ENCODE measurements at regions of chr1 and their contacts with region 1.

Region 1: DNA sequence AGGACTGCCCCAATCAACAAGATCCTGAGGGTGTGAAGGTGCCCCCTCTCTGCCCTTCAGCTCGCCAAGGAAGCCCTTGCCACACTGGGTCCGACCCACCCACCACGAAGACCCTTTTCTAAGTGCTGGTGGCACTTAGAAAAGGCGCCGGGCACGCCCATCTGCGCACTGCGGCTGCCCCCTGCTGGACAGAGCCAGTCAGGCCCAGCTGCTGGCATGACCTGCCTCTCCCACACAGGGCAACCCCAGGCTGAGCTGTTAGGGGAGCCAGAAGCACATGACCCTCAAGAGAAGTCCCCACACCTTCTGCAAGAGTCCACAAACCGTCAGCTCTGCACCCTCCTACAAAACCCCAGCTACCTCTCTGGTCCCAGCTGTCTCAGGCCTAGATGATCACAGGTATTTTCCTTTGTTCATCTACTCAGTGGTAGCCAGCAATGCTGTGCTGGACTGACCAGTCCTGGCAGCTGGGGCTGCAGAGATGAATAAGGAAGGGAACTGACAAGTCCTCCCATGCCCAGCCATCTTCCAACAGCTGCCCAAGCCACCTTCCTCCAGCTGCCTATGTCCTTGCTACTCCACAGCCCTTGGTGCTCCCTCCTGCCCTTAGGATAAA is 40.0 kb upstream of the ZC3H12A start:
- DNase-seq: peak; percentile 75
- ATAC-seq: peak; percentile 90
- H3K4me3 ChIP-seq: no peak overlapping the region
- H3K4me3 Mint-ChIP-seq: no peak overlapping the region
- H3K27ac ChIP-seq: no peak overlapping the region
- H3K27ac Mint-ChIP-seq: no peak overlapping the region
- H3K4me1 ChIP-seq: no peaks in the 10 kb centered on the region
- H3K4me1 Mint-ChIP-seq: no peaks in the 10 kb centered on the region
- H3K27me3 ChIP-seq: peaks cover 0 to 3% (median 0%) of the 10 kb centered on the region in 4 experiments
- H3K27me3 Mint-ChIP-seq: peaks cover 32% of the 10 kb centered on the region
- CTCF ChIP-seq: peak; percentile 93

Region 2: GRCh38 chr1:36099681-36100341 is 1334.6 kb before region 1 on chr1:
- CTCF ChIA-PET with region 1: no interaction called
- POLR2A ChIA-PET with region 1: no interaction called
- intact Hi-C with region 1: loop called (anchors 5 kb)
- DNase-seq: peak; percentile 81
- ATAC-seq: peak; percentile 86
- H3K4me3 ChIP-seq: peak overlapping the region in 1 of 5 experiments; percentile 9
- H3K4me3 Mint-ChIP-seq: no peak overlapping the region
- H3K27ac ChIP-seq: no peak overlapping the region
- H3K27ac Mint-ChIP-seq: no peak overlapping the region
- H3K4me1 ChIP-seq: peaks cover 0 to 7% of the 10 kb centered on the region in 2 donors
- H3K4me1 Mint-ChIP-seq: peaks cover 2% of the 10 kb centered on the region
- H3K27me3 ChIP-seq: no peaks in the 10 kb centered on the region
- H3K27me3 Mint-ChIP-seq: no peaks in the 10 kb centered on the region
- CTCF ChIP-seq: peak; percentile 93

Region 3: GRCh38 chr1:36553591-36554322 is 880.6 kb before region 1 on chr1:
- CTCF ChIA-PET with region 1: interaction called, 11 read pairs
- POLR2A ChIA-PET with region 1: no interaction called
- intact Hi-C with region 1: loop called (anchors 1 kb)
- DNase-seq: peak; percentile 73
- ATAC-seq: peak; percentile 61
- H3K4me3 ChIP-seq: no peak overlapping the region
- H3K4me3 Mint-ChIP-seq: no peak overlapping the region
- H3K27ac ChIP-seq: no peak overlapping the region
- H3K27ac Mint-ChIP-seq: no peak overlapping the region
- H3K4me1 ChIP-seq: no peaks in the 10 kb centered on the region
- H3K4me1 Mint-ChIP-seq: peaks cover 11% of the 10 kb centered on the region
- H3K27me3 ChIP-seq: peaks cover 0 to 30% (median 17%) of the 10 kb centered on the region in 4 experiments
- H3K27me3 Mint-ChIP-seq: peaks cover 34% of the 10 kb centered on the region
- CTCF ChIP-seq: peak; percentile 74

Region 4: DNA sequence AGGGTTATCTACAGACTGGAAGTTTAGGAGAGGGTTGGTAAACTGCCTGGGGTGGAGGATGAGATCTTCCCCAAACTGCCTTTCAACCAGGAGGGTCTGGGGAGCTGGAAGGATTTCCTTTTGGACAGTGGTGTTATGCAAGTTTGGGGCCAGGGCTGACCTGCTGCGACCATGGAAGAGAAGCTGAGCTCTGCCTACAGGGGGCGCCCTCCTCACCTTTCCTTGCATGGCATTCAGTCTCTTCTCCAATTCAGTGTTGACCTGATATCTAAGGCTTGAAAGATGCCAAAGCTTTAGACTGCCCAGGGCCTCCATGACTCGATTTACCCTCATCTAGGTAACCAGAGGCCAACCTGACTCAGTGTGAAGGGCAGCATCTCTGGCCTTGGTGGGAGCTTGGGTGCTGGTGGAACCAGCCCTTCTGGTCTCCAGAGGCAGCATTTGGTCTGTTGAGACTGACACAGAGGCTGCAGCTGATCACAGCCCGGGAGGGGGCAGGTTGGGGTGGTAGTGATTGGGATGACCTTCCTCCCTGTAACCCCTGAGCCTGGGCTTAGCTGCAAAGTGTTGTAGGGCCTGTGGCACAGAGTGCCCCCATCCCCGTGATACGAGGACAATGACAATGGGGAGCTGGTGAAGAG is 570.1 kb before region 1 on chr1:
- CTCF ChIA-PET with region 1: interaction called, 3 read pairs
- POLR2A ChIA-PET with region 1: no interaction called
- intact Hi-C with region 1: loop called (anchors 10 kb)
- DNase-seq: peak; percentile 25
- ATAC-seq: no peak
- H3K4me3 ChIP-seq: no peak overlapping the region
- H3K4me3 Mint-ChIP-seq: no peak overlapping the region
- H3K27ac ChIP-seq: no peak overlapping the region
- H3K27ac Mint-ChIP-seq: no peak overlapping the region
- H3K4me1 ChIP-seq: no peaks in the 10 kb centered on the region
- H3K4me1 Mint-ChIP-seq: no peaks in the 10 kb centered on the region
- H3K27me3 ChIP-seq: no peaks in the 10 kb centered on the region
- H3K27me3 Mint-ChIP-seq: peaks cover 12% of the 10 kb centered on the region
- CTCF ChIP-seq: peak; percentile 43

Region 5: DNA sequence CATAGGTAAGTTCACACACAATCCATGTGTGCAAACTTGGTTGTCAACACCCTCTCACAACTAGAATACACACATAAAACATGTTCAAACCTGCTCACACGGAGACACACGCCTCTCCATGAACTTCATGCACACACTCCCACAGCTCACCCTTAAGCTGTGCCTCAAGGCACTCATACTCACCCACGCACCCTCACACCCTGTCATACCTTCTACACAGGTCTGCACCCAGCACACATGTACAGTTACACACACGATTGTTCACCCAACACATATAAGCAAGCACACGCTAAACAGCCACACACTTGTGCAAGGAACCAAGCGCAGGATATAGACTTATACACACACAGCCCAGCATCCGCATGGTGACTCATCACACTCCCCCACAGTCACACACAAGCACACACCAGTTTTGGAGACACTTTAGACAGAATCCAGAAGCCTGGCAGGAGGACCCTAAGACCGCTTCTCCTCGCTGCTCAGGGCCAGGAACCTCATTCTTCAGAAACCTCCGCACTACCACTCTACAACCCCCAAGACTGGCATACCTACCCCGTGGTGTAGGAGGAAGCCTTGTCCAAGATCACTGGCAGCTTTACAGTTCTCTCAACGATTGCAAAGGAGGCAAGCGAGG is 18.7 kb before region 1 on chr1:
- CTCF ChIA-PET with region 1: interaction called, 10 read pairs
- POLR2A ChIA-PET with region 1: no interaction called
- intact Hi-C with region 1: no loop called
- DNase-seq: no peak
- ATAC-seq: no peak
- H3K4me3 ChIP-seq: no peak overlapping the region
- H3K4me3 Mint-ChIP-seq: no peak overlapping the region
- H3K27ac ChIP-seq: no peak overlapping the region
- H3K27ac Mint-ChIP-seq: no peak overlapping the region
- H3K4me1 ChIP-seq: no peaks in the 10 kb centered on the region
- H3K4me1 Mint-ChIP-seq: no peaks in the 10 kb centered on the region
- H3K27me3 ChIP-seq: peaks cover 0 to 13% (median 1%) of the 10 kb centered on the region in 4 experiments
- H3K27me3 Mint-ChIP-seq: peaks cover 37% of the 10 kb centered on the region
- CTCF ChIP-seq: no peak

Region 6: GRCh38 chr1:37486680-37487618 is 52.5 kb after region 1 on chr1:
- CTCF ChIA-PET with region 1: interaction called, 13 read pairs
- POLR2A ChIA-PET with region 1: no interaction called
- intact Hi-C with region 1: no loop called
- DNase-seq: peak; percentile 83
- ATAC-seq: peak; percentile 89
- H3K4me3 ChIP-seq: no peak overlapping the region
- H3K4me3 Mint-ChIP-seq: no peak overlapping the region
- H3K27ac ChIP-seq: peak overlapping the region; percentile 16 to 66
- H3K27ac Mint-ChIP-seq: peak overlapping the region; percentile 86
- H3K4me1 ChIP-seq: peaks cover 11 to 14% of the 10 kb centered on the region in 2 donors
- H3K4me1 Mint-ChIP-seq: peaks cover 24% of the 10 kb centered on the region
- H3K27me3 ChIP-seq: no peaks in the 10 kb centered on the region
- H3K27me3 Mint-ChIP-seq: no peaks in the 10 kb centered on the region
- CTCF ChIP-seq: peak; percentile 97

Region 7: GRCh38 chr1:37549341-37549740 is 114.9 kb after region 1 on chr1:
- CTCF ChIA-PET with region 1: no interaction called
- POLR2A ChIA-PET with region 1: no interaction called
- intact Hi-C with region 1: no loop called
- DNase-seq: no peak
- ATAC-seq: no peak
- H3K4me3 ChIP-seq: no peak overlapping the region
- H3K4me3 Mint-ChIP-seq: no peak overlapping the region
- H3K27ac ChIP-seq: peak overlapping the region in 1 of 2 donors; percentile 58
- H3K27ac Mint-ChIP-seq: no peak overlapping the region
- H3K4me1 ChIP-seq: peaks cover 13 to 17% of the 10 kb centered on the region in 2 donors
- H3K4me1 Mint-ChIP-seq: peaks cover 34% of the 10 kb centered on the region
- H3K27me3 ChIP-seq: no peaks in the 10 kb centered on the region
- H3K27me3 Mint-ChIP-seq: no peaks in the 10 kb centered on the region
- CTCF ChIP-seq: no peak

Region 8: GRCh38 chr1:37574834-37575480 is 140.6 kb after region 1 on chr1:
- CTCF ChIA-PET with region 1: no interaction called
- POLR2A ChIA-PET with region 1: no interaction called
- intact Hi-C with region 1: no loop called
- DNase-seq: no peak
- ATAC-seq: no peak
- H3K4me3 ChIP-seq: no peak overlapping the region
- H3K4me3 Mint-ChIP-seq: no peak overlapping the region
- H3K27ac ChIP-seq: no peak overlapping the region
- H3K27ac Mint-ChIP-seq: no peak overlapping the region
- H3K4me1 ChIP-seq: no peaks in the 10 kb centered on the region
- H3K4me1 Mint-ChIP-seq: no peaks in the 10 kb centered on the region
- H3K27me3 ChIP-seq: no peaks in the 10 kb centered on the region
- H3K27me3 Mint-ChIP-seq: no peaks in the 10 kb centered on the region
- CTCF ChIP-seq: no peak